Right ventricle myocardium inferior (tissue), 1 donor: ENCODE measurements at regions of chr6 and their contacts with region 1.

Region 1: GRCh38 chr6:19175023-19175422 is 662.1 kb upstream of the ID4 start:
- DNase-seq: no peak
- ATAC-seq: no peak

Region 2: GRCh38 chr6:18245642-18246041 is 929.4 kb before region 1 on chr6:
- intact Hi-C with region 1: no loop called
- DNase-seq: no peak
- ATAC-seq: no peak

Region 3: GRCh38 chr6:19035461-19036195 is 139.4 kb before region 1 on chr6:
- intact Hi-C with region 1: loop called (anchors 10 kb)
- DNase-seq: no peak
- ATAC-seq: peak; percentile 41